ENCODE measurements at regions of chr3 and their contacts with region 1.

Region 1: GRCh38 chr3:71130471-71131374 is 452.8 kb downstream of the FOXP1 start:
- DNase-seq: no peak
- ATAC-seq: peak; percentile 69
- H3K4me3 Mint-ChIP-seq: peak overlapping the region; percentile 88
- H3K27ac Mint-ChIP-seq: peak overlapping the region; percentile 93
- H3K4me1 Mint-ChIP-seq: peaks cover 79% of the 10 kb centered on the region
- H3K27me3 Mint-ChIP-seq: no peaks in the 10 kb centered on the region
- CTCF ChIP-seq: no peak

Region 2: DNA sequence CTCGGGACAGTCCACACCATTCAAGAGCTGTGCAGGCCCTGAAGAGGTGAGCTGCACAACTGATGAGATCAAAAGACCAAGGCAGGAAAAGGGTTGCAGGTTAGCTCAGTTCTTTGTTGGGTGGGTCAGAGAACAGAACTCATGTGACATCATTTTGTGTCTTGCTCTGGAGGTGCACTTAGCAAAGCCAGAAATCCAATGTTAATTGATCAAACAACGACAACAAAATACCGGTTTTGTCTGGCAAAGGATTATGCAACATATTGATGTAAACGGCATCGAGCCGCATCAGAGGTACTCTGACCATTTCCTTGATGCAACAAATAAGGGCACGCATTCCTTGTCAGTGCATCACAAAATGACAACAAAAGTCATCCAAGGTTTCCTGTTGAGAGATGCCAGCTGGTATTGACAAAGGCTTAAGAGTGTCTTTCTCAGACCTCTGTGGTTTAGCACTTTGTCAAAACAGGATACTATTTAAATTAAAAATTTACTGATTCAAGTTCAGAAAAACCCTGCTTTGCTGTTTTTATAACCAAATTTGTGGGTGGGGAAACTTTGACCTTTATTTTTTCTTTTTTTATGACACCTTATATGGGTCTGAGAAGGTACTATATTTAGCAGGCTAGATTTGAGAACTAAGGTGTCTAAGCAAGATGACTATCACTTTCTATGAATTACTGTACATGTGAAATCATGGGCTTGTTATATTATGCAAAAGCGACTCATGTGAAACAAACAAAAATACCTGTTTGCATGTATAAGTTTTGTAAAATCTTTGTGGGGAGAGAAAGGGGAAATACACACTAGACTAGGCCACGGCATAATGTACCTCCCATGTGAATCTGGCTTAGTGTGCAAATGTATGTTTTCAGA is 43.3 kb before region 1 on chr3:
- CTCF ChIA-PET with region 1: interaction called, 5 read pairs
- POLR2A ChIA-PET with region 1: interaction called, 339 read pairs
- intact Hi-C with region 1: loop called (anchors 1 kb)
- DNase-seq: no peak
- ATAC-seq: peak; percentile 56
- H3K4me3 Mint-ChIP-seq: peak overlapping the region; percentile 54
- H3K27ac Mint-ChIP-seq: peak overlapping the region; percentile 99
- H3K4me1 Mint-ChIP-seq: peaks cover 97% of the 10 kb centered on the region
- H3K27me3 Mint-ChIP-seq: no peaks in the 10 kb centered on the region
- CTCF ChIP-seq: no peak

Region 3: DNA sequence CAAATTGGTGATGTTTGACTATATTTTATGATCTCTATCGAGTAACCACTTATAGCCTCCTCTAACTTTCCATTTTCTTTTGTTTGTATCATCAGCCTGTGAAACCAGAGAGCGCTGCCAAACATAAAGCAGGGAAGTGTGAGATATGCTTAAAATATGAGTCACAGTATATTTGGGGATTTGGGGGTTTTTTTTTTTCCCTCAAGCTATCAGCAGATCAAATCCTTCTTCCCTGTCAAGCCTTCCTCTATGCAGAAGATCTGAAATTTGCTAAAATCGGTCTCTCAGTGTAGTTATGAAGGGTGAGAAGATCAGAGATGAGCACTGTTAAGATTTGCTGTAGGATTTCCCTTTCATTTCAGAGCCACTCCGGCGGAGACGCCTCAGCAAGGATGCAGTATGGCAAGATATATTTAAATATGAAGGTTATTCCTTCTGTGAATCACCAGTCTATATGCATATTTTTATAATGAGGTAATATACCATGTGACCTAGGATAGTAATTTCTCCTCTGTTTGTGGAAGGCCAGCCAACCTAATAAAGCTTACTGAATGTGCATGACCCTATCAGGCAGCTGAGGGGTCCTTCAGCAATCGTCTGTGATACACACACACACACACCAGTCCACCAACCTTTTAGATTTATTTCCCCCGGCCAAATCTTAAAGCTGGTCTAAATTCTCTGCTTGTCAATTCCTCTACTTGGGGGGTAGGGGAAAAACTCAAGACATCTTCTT is 21.3 kb before region 1 on chr3:
- CTCF ChIA-PET with region 1: no interaction called
- POLR2A ChIA-PET with region 1: interaction called, 12 read pairs
- intact Hi-C with region 1: no loop called
- DNase-seq: no peak
- ATAC-seq: peak; percentile 60
- H3K4me3 Mint-ChIP-seq: peak overlapping the region; percentile 52
- H3K27ac Mint-ChIP-seq: peak overlapping the region; percentile 90
- H3K4me1 Mint-ChIP-seq: peaks cover 86% of the 10 kb centered on the region
- H3K27me3 Mint-ChIP-seq: no peaks in the 10 kb centered on the region
- CTCF ChIP-seq: no peak

Region 4: GRCh38 chr3:71149959-71150954 is 19.5 kb after region 1 on chr3:
- CTCF ChIA-PET with region 1: no interaction called
- POLR2A ChIA-PET with region 1: interaction called, 49 read pairs
- intact Hi-C with region 1: loop called (anchors 1 kb)
- DNase-seq: no peak
- ATAC-seq: peak; percentile 69
- H3K4me3 Mint-ChIP-seq: peak overlapping the region; percentile 52
- H3K27ac Mint-ChIP-seq: peak overlapping the region; percentile 86
- H3K4me1 Mint-ChIP-seq: peaks cover 28% of the 10 kb centered on the region
- H3K27me3 Mint-ChIP-seq: no peaks in the 10 kb centered on the region
- CTCF ChIP-seq: no peak

Region 5: DNA sequence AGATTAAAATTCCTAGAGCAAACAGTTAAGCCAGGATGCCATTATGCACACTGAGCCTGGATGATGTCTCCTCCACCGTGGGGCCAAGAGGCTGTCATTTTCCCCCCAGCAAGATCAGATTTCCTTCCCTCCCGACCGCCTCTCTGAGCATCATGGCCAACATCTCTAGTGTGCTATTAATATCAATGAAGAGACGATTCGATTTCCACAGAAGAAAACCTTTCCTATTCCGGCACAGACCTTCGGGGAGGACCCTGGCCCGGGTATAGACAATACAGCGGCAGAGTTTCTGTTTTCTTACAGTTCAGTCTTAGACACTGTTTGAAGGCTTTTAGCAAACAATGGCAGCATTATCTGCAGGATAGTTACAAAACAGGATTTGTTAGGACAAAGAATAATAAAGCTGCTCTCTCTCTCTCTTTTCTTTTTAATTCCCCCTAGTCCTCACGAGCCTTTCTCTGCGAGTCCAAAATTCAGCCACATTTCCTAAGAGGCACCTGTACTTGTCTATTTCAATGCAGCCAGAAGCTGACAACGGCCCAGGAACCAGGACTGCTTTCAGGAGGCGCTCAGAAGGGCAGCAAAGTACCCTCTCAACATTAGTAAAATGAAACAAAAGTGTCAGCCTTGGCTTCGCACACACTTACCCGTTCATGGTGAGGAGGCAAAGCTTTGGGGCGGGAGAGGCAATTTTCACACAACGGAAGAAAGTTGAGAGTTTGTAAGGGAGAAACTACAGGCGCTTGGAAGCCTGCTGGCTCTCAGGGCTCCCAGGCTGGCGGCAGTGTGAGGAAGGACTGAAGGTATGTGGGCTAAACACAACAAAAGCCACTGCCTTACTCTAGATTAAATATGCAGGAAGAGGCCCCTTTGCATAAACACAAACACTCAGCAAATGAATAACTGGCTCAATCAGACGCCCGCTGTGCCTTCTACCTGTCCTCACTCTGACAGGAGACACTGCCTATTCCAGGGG is 174.8 kb after region 1 on chr3:
- CTCF ChIA-PET with region 1: no interaction called
- POLR2A ChIA-PET with region 1: interaction called, 23 read pairs
- intact Hi-C with region 1: loop called (anchors 2 kb)
- DNase-seq: no peak
- ATAC-seq: peak; percentile 38
- H3K4me3 Mint-ChIP-seq: peak overlapping the region; percentile 92
- H3K27ac Mint-ChIP-seq: peak overlapping the region; percentile 94
- H3K4me1 Mint-ChIP-seq: peaks cover 79% of the 10 kb centered on the region
- H3K27me3 Mint-ChIP-seq: no peaks in the 10 kb centered on the region
- CTCF ChIP-seq: no peak

Region 6: GRCh38 chr3:71444028-71444860 is 313.5 kb after region 1 on chr3:
- CTCF ChIA-PET with region 1: no interaction called
- POLR2A ChIA-PET with region 1: interaction called, 5 read pairs
- intact Hi-C with region 1: loop called (anchors 5 kb)
- DNase-seq: peak; percentile 62
- ATAC-seq: peak; percentile 80
- H3K4me3 Mint-ChIP-seq: peak overlapping the region; percentile 78
- H3K27ac Mint-ChIP-seq: peak overlapping the region; percentile 99
- H3K4me1 Mint-ChIP-seq: peaks cover 93% of the 10 kb centered on the region
- H3K27me3 Mint-ChIP-seq: no peaks in the 10 kb centered on the region
- CTCF ChIP-seq: no peak

Measured in activated B cell treated with CpG ODN at 0.5 μM for 24 hours (primary cell).